ENCODE measurements at regions of chr5 and their contacts with region 1.

Region 1: GRCh38 chr5:135457424-135458071 is 5.4 kb upstream of the TIFAB start:
- DNase-seq: peak; percentile 27
- ATAC-seq: peak; percentile 42
- H3K4me3 Mint-ChIP-seq: no peak overlapping the region
- H3K27ac Mint-ChIP-seq: no peak overlapping the region
- H3K4me1 Mint-ChIP-seq: no peaks in the 10 kb centered on the region
- H3K27me3 Mint-ChIP-seq: peaks cover 24% of the 10 kb centered on the region
- CTCF ChIP-seq: no peak

Region 2: GRCh38 chr5:135255461-135256178 is 201.9 kb before region 1 on chr5:
- CTCF ChIA-PET with region 1: no interaction called
- POLR2A ChIA-PET with region 1: no interaction called
- intact Hi-C with region 1: no loop called
- DNase-seq: no peak
- ATAC-seq: no peak
- H3K4me3 Mint-ChIP-seq: no peak overlapping the region
- H3K27ac Mint-ChIP-seq: no peak overlapping the region
- H3K4me1 Mint-ChIP-seq: no peaks in the 10 kb centered on the region
- H3K27me3 Mint-ChIP-seq: peaks cover 17% of the 10 kb centered on the region
- CTCF ChIP-seq: no peak

Region 3: DNA sequence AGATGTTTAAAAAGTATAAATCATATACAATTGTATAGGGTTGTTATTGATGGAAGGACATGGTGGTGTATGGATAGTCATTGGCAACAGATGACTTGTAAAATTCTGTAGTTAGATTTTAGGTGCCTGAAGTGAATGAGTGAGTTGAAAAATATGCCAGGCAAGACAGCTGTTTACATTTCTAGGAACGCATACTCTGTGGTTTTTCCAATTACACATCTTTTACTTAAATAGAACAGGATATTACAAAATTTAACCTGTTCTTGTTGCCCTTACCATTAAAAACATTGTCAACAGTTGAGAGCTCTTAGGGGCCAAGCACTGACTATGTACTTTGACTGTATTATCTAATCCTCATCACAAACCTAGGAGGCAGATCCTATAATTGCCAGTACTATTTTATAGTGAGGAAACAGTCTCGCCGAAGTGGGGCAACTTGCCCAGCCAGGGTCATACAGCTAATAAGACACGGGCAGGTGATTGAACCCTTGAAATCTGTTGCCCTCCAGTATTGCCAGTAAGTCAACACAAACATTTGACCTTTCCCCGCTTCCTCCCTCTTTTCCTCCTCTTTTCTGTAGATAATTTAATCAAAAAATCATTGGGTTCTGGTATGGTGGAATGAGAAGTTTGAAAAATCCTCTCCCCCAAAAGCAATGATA is 147.1 kb before region 1 on chr5:
- CTCF ChIA-PET with region 1: no interaction called
- POLR2A ChIA-PET with region 1: no interaction called
- intact Hi-C with region 1: no loop called
- DNase-seq: no peak
- ATAC-seq: no peak
- H3K4me3 Mint-ChIP-seq: no peak overlapping the region
- H3K27ac Mint-ChIP-seq: no peak overlapping the region
- H3K4me1 Mint-ChIP-seq: peaks cover 13% of the 10 kb centered on the region
- H3K27me3 Mint-ChIP-seq: peaks cover 16% of the 10 kb centered on the region
- CTCF ChIP-seq: no peak

Region 4: DNA sequence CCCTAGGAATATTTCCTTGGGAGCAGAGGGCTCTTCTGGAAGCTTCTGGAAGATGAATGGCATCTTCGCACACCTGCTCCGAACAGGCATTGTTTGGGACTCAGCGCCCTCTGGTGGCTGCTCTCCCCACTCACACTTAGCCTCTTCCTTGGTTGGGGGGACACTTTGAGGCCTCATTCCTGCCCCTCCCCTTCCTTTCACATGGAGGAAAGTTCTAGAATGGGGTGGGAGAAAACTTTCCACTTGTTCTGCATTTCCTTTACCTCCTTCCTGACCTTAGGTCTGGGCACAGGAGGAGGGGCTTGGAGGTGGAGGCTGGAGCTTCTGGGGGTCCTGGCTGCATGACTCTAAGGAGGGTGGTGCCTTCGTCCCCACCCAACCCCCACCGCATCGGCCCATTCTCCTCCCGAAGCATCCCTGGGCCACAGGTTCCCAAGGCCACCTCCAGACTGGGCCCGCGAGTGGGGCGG is 754.7 kb after region 1 on chr5:
- CTCF ChIA-PET with region 1: no interaction called
- POLR2A ChIA-PET with region 1: no interaction called
- intact Hi-C with region 1: loop called (anchors 2 kb)
- DNase-seq: peak; percentile 37
- ATAC-seq: peak; percentile 28
- H3K4me3 Mint-ChIP-seq: no peak overlapping the region
- H3K27ac Mint-ChIP-seq: no peak overlapping the region
- H3K4me1 Mint-ChIP-seq: no peaks in the 10 kb centered on the region
- H3K27me3 Mint-ChIP-seq: peaks cover 20% of the 10 kb centered on the region
- CTCF ChIP-seq: peak; percentile 46

Region 5: DNA sequence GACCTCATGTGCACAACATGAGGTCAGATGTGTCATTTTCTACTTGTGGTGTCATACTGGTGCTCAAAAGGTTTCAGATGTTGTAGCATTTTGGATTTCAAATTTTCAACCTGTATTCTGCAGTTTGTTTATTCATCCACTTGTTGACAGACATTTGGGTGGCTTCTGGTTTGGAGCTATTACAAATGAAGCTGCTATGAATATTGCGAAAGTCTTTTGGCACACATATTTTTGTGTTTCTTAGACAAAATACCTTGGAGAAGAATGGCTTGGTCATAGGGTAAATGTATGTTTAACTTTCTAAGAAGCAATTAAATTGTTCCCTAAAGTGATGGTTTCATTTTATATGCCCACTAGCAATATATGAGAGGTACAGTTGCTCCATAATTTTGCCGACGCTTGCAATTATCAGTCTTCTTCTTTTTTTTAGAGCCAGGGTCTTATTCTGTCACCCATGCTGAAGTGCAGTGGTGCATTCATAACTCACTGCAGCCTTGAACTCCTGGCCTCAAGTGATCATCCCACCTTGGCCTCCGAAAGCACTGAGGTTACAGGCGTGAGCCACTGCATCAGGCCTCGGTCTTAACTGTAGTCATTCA is 978.5 kb after region 1 on chr5:
- CTCF ChIA-PET with region 1: no interaction called
- POLR2A ChIA-PET with region 1: no interaction called
- intact Hi-C with region 1: no loop called
- DNase-seq: no peak
- ATAC-seq: no peak
- H3K4me3 Mint-ChIP-seq: no peak overlapping the region
- H3K27ac Mint-ChIP-seq: no peak overlapping the region
- H3K4me1 Mint-ChIP-seq: no peaks in the 10 kb centered on the region
- H3K27me3 Mint-ChIP-seq: no peaks in the 10 kb centered on the region
- CTCF ChIP-seq: no peak

Measured in activated B cell treated with CpG ODN at 0.5 μM for 24 hours (primary cell).